Activated CD8-positive, alpha-beta T cell treated with anti-CD3 and anti-CD28 coated beads for 36 hours (primary cell): ENCODE measurements at regions of chr12 and their contacts with region 1.

Region 1: GRCh38 chr12:13203034-13203922 is 6.8 kb downstream of the EMP1 start:
- DNase-seq: peak; percentile 31
- ATAC-seq: no peak
- H3K4me3 Mint-ChIP-seq: no peak overlapping the region
- H3K27ac Mint-ChIP-seq: no peak overlapping the region
- H3K4me1 Mint-ChIP-seq: peaks cover 20% of the 10 kb centered on the region
- H3K27me3 Mint-ChIP-seq: peaks cover 6% of the 10 kb centered on the region
- CTCF ChIP-seq: no peak

Region 2: GRCh38 chr12:13100882-13101769 is 102.2 kb before region 1 on chr12:
- CTCF ChIA-PET with region 1: interaction called, 150 read pairs
- POLR2A ChIA-PET with region 1: interaction called, 8 read pairs
- intact Hi-C with region 1: no loop called
- DNase-seq: peak; percentile 94
- ATAC-seq: peak; percentile 86
- H3K4me3 Mint-ChIP-seq: peak overlapping the region; percentile 60
- H3K27ac Mint-ChIP-seq: peak overlapping the region; percentile 76
- H3K4me1 Mint-ChIP-seq: peaks cover 47% of the 10 kb centered on the region
- H3K27me3 Mint-ChIP-seq: no peaks in the 10 kb centered on the region
- CTCF ChIP-seq: no peak

Region 3: GRCh38 chr12:13165617-13166041 is 37.6 kb before region 1 on chr12:
- CTCF ChIA-PET with region 1: no interaction called
- POLR2A ChIA-PET with region 1: no interaction called
- intact Hi-C with region 1: loop called (anchors 5 kb)
- DNase-seq: peak; percentile 94
- ATAC-seq: peak; percentile 93
- H3K4me3 Mint-ChIP-seq: no peak overlapping the region
- H3K27ac Mint-ChIP-seq: peak overlapping the region; percentile 55
- H3K4me1 Mint-ChIP-seq: peaks cover 19% of the 10 kb centered on the region
- H3K27me3 Mint-ChIP-seq: no peaks in the 10 kb centered on the region
- CTCF ChIP-seq: no peak